PC-9 (cell line): ENCODE measurements at regions of chr14 and their contacts with region 1.

Region 1: GRCh38 chr14:25006961-25007795 is 42.8 kb downstream of the STXBP6 start:
- DNase-seq: peak; percentile 21 to 82
- H3K4me3 ChIP-seq: no peak overlapping the region
- H3K27ac ChIP-seq: no peak overlapping the region
- H3K4me1 ChIP-seq: no peaks in the 10 kb centered on the region
- H3K27me3 ChIP-seq: no peaks in the 10 kb centered on the region
- CTCF ChIP-seq: no peak

Region 2: DNA sequence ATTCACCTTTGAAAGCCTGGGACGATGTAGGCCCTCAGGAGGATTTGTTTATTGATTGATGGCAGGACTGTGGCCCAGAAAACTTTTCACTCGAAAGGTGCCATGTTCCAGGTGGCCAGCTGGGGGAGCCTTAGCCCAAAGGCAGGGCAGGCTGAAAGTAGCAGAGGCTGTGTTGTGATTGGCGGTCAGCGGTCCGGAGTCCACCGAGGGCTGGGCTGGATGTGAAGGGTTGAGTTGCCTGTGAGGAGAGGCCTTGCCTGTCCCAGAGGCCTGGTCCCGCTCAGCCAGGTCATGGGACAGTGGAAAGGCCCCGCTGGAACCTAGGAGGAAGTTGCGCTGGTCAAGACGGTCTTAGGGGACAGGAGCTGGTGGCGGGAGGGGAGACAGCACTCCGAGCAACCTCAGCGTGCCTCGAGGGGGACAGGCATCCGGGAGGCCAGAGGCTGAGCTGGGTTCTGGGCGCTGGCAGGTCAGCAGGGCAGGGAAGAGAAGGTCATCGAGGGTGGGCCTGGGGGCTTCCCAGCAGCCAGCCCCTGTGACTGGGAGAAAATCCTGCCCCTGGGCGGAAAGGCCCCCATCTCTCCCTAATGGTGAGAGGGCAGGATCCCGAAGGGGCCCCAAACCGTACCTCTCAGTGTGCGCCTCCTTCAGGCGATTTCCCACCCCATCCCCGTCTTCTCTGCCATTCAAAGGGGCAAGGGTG is 525.4 kb before region 1 on chr14:
- CTCF ChIA-PET with region 1: no interaction called
- POLR2A ChIA-PET with region 1: no interaction called
- intact Hi-C with region 1: no loop called
- DNase-seq: peak in 1 of 2 experiments; percentile 3
- H3K4me3 ChIP-seq: no peak overlapping the region
- H3K27ac ChIP-seq: no peak overlapping the region
- H3K4me1 ChIP-seq: no peaks in the 10 kb centered on the region
- H3K27me3 ChIP-seq: no peaks in the 10 kb centered on the region
- CTCF ChIP-seq: peak; percentile 56

Region 3: DNA sequence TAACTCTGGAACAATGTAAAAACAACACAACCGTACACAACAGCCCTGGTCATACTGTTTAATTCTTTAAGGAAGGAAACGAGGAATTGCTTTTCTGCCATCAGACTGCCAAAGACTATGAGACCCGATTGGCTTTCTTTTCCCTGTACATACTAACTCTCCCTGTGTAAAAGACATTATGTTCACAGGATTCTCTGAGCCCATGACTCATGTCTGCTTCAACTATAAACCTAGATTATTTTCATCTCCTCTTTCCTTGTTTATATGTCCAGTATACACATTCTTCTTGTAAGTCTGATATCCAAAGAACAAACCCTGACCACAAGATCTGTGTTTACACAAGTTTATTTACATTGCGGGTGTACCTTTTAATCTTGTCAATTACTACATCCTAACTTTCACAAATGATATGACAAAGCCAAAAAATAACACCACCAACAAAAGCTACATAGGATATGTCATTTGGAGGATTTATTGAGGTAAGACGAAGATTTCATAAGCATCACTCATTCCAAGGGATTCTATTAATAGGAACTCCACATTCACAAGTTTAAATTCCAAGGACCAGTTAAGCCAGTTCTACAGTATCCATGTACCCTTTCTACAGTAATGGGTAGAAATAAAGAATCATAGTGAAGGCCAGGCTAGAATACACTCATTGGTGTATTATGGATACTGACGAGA is 24.6 kb before region 1 on chr14:
- CTCF ChIA-PET with region 1: no interaction called
- POLR2A ChIA-PET with region 1: no interaction called
- intact Hi-C with region 1: loop called (anchors 1 kb)
- DNase-seq: peak; percentile 2 to 93
- H3K4me3 ChIP-seq: no peak overlapping the region
- H3K27ac ChIP-seq: 0 out of 2 replicates have a peak overlapping the region, but pooled peaks have one; percentile 19
- H3K4me1 ChIP-seq: peaks cover 6% of the 10 kb centered on the region; the same call in 1 of the 2 replicates
- H3K27me3 ChIP-seq: no peaks in the 10 kb centered on the region
- CTCF ChIP-seq: no peak